Activated T-helper 1 cell treated with anti-CD3 and anti-CD28 coated beads, Interleukin-12 subunit alpha, Interleukin-12 subunit beta, Interleukin-2, Interleukin-4 antibody, amounts not matched to agents 30 ng/mL and 10 ng/mL and 1 ng/mL, durations not matched to agents 14 hours and 24 hours and 36 hours (primary cell): ENCODE measurements at regions of chr10 and their contacts with region 1.

Region 1: GRCh38 chr10:119281581-119282071 is 74.3 kb downstream of the GRK5 start:
- DNase-seq: no peak
- H3K4me3 Mint-ChIP-seq: no peak overlapping the region
- H3K27ac Mint-ChIP-seq: no peak overlapping the region
- H3K4me1 Mint-ChIP-seq: peaks cover 49% of the 10 kb centered on the region
- H3K27me3 Mint-ChIP-seq: no peaks in the 10 kb centered on the region

Region 2: GRCh38 chr10:119253433-119254174 is 28.0 kb before region 1 on chr10:
- intact Hi-C with region 1: loop called (anchors 2 kb)
- DNase-seq: no peak
- H3K4me3 Mint-ChIP-seq: peak overlapping the region; percentile 15
- H3K27ac Mint-ChIP-seq: peak overlapping the region; percentile 88
- H3K4me1 Mint-ChIP-seq: peaks cover 63% of the 10 kb centered on the region
- H3K27me3 Mint-ChIP-seq: no peaks in the 10 kb centered on the region

Region 3: GRCh38 chr10:119268871-119269506 is 12.6 kb before region 1 on chr10:
- intact Hi-C with region 1: loop called (anchors 1 kb)
- DNase-seq: peak; percentile 85
- H3K4me3 Mint-ChIP-seq: peak overlapping the region; percentile 43
- H3K27ac Mint-ChIP-seq: peak overlapping the region; percentile 98
- H3K4me1 Mint-ChIP-seq: peaks cover 76% of the 10 kb centered on the region
- H3K27me3 Mint-ChIP-seq: no peaks in the 10 kb centered on the region

Region 4: GRCh38 chr10:119292968-119293760 is 11.5 kb after region 1 on chr10:
- intact Hi-C with region 1: loop called (anchors 1 kb)
- DNase-seq: no peak
- H3K4me3 Mint-ChIP-seq: peak overlapping the region; percentile 46
- H3K27ac Mint-ChIP-seq: peak overlapping the region; percentile 78
- H3K4me1 Mint-ChIP-seq: peaks cover 61% of the 10 kb centered on the region
- H3K27me3 Mint-ChIP-seq: no peaks in the 10 kb centered on the region